GM12878 (cell line): ENCODE measurements at regions of chr14 and their contacts with region 1.

Region 1: DNA sequence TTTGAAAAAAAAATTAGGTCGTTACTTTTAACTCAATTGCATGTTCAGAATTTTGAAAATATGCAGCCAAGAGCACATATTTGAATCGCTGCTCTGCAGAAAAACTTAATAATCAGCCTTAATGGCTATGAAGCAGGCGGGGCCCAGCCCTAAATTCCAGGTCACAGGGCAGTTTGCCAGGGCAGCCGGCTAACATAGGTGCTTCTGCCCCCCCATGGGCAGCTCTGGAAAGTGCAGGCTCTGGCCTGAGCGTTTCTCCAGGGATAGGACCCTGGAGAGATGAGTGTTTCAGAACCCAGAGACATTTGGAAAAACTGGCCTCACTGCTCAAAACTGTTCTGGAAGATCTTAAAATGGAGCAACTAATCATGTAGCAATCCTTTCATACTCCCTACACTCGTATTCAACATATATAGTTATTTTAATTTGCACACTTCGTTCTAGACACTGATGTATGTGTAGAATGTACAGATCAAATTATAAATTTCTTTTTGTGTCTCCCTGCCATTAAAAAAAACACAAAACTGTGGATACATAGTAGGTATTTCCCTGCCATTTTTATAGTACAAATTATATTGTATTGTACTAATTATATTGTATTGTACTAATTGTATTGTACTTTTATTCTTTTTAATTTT is 26.0 kb upstream of the PTGR2 start:
- DNase-seq: peak; percentile 20
- ATAC-seq: peak; percentile 88
- H3K4me3 ChIP-seq: no peak overlapping the region
- H3K27ac ChIP-seq: no peak overlapping the region
- H3K4me1 ChIP-seq: peaks cover 11% of the 10 kb centered on the region
- H3K27me3 ChIP-seq: no peaks in the 10 kb centered on the region
- CTCF ChIP-seq: peak; percentile 89 to 95 (median 93)
- EP300 ChIP-seq: no peak
- POLR2A ChIP-seq: no peak
- RAD21 ChIP-seq: peak; percentile 95

Region 2: DNA sequence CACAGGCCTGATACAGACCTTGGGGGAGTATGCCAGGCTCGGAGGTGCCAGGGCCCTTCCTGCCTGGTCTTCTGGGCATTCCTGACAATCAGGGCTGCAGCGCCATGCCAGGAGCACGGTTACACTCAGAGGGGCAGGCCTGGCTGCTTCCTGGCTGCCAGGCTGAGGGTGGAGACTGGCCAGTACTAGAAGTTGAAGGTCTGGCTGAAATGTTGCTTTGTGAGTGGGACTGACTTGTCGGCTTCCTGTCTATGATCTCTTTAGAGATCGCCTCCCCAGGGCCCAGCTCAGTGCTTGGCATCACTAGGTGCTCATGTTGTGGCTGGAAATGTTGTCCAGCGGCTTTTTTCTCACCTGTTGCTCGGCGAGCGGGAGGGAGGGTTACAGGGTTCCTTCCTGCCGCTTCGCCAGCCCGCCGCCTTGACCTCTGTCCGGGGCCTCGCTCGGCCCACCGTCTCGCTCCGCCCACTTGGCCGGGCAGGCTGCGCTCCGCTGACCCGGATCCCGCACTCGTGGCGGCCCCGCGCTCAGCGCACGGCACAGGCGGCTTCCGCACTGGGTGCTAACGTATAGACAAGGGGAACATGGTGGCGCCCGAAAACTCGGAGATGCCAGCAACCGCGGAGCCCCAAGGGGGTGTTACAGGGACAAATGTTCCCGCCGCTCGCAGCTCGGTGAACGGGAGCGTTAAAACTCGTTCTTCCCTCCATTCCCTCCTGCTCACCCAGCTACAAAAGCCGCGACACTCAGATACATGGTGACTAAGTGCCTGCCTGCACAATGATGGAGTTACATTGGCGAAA is 555.7 kb before region 1 on chr14:
- CTCF ChIA-PET with region 1: no interaction called
- POLR2A ChIA-PET with region 1: no interaction called
- RAD21 ChIA-PET with region 1: no interaction called
- SMC1A ChIA-PET with region 1: no interaction called
- in situ Hi-C with region 1: no loop called
- intact Hi-C with region 1: no loop called
- DNase-seq: no peak
- ATAC-seq: peak; percentile 97
- H3K4me3 ChIP-seq: peak overlapping the region; percentile 46; the same call in 1 of the 2 replicates
- H3K27ac ChIP-seq: peak overlapping the region; percentile 3; the same call in 1 of the 2 replicates
- H3K4me1 ChIP-seq: peaks cover 14% of the 10 kb centered on the region
- H3K27me3 ChIP-seq: no peaks in the 10 kb centered on the region
- CTCF ChIP-seq: no peak
- EP300 ChIP-seq: 0 out of 4 replicates have a peak, but pooled peaks of 1 of the 2 experiments have one; percentile 21
- POLR2A ChIP-seq: no peak; the same call in 1 of the 2 replicates
- RAD21 ChIP-seq: no peak

Region 3: GRCh38 chr14:73746520-73747378 is 78.9 kb before region 1 on chr14:
- CTCF ChIA-PET with region 1: interaction called, 288 read pairs
- POLR2A ChIA-PET with region 1: interaction called, 8 read pairs
- RAD21 ChIA-PET with region 1: interaction called, 23 read pairs
- SMC1A ChIA-PET with region 1: interaction called, 140 read pairs
- in situ Hi-C with region 1: loop called (anchors 5 kb)
- intact Hi-C with region 1: no loop called
- DNase-seq: no peak
- ATAC-seq: peak; percentile 13
- H3K4me3 ChIP-seq: peak overlapping the region; percentile 33
- H3K27ac ChIP-seq: peak overlapping the region; percentile 29
- H3K4me1 ChIP-seq: peaks cover 90% of the 10 kb centered on the region
- H3K27me3 ChIP-seq: no peaks in the 10 kb centered on the region
- CTCF ChIP-seq: peak in 2 of 3 experiments; percentile 15 to 16; a peak in 3 of 6 replicates
- EP300 ChIP-seq: no peak
- POLR2A ChIP-seq: no peak
- RAD21 ChIP-seq: peak; percentile 39

Region 4: GRCh38 chr14:73759714-73760597 is 65.7 kb before region 1 on chr14:
- CTCF ChIA-PET with region 1: interaction called, 288 read pairs
- POLR2A ChIA-PET with region 1: interaction called, 6 read pairs
- RAD21 ChIA-PET with region 1: interaction called, 48 read pairs
- SMC1A ChIA-PET with region 1: interaction called, 140 read pairs
- in situ Hi-C with region 1: no loop called
- intact Hi-C with region 1: no loop called
- DNase-seq: peak; percentile 66
- ATAC-seq: peak; percentile 71
- H3K4me3 ChIP-seq: peak overlapping the region; percentile 83
- H3K27ac ChIP-seq: peak overlapping the region; percentile 100
- H3K4me1 ChIP-seq: peaks cover 63% of the 10 kb centered on the region
- H3K27me3 ChIP-seq: no peaks in the 10 kb centered on the region
- CTCF ChIP-seq: peak in 1 of 3 experiments; percentile 7; a peak in 1 of 6 replicates
- EP300 ChIP-seq: peak; percentile 48 to 58; a peak in 2 of 4 replicates
- POLR2A ChIP-seq: peak; percentile 97
- RAD21 ChIP-seq: no peak

Region 5: GRCh38 chr14:73785873-73786695 is 39.6 kb before region 1 on chr14:
- CTCF ChIA-PET with region 1: interaction called, 40 read pairs
- POLR2A ChIA-PET with region 1: interaction called, 4 read pairs
- RAD21 ChIA-PET with region 1: interaction called, 31 read pairs
- SMC1A ChIA-PET with region 1: interaction called, 10 read pairs
- in situ Hi-C with region 1: no loop called
- intact Hi-C with region 1: loop called (anchors 5 kb)
- DNase-seq: no peak
- ATAC-seq: peak; percentile 75
- H3K4me3 ChIP-seq: peak overlapping the region; percentile 97
- H3K27ac ChIP-seq: peak overlapping the region; percentile 94
- H3K4me1 ChIP-seq: peaks cover 41% of the 10 kb centered on the region
- H3K27me3 ChIP-seq: no peaks in the 10 kb centered on the region
- CTCF ChIP-seq: no peak
- EP300 ChIP-seq: no peak
- POLR2A ChIP-seq: peak; percentile 81
- RAD21 ChIP-seq: no peak

Region 6: DNA sequence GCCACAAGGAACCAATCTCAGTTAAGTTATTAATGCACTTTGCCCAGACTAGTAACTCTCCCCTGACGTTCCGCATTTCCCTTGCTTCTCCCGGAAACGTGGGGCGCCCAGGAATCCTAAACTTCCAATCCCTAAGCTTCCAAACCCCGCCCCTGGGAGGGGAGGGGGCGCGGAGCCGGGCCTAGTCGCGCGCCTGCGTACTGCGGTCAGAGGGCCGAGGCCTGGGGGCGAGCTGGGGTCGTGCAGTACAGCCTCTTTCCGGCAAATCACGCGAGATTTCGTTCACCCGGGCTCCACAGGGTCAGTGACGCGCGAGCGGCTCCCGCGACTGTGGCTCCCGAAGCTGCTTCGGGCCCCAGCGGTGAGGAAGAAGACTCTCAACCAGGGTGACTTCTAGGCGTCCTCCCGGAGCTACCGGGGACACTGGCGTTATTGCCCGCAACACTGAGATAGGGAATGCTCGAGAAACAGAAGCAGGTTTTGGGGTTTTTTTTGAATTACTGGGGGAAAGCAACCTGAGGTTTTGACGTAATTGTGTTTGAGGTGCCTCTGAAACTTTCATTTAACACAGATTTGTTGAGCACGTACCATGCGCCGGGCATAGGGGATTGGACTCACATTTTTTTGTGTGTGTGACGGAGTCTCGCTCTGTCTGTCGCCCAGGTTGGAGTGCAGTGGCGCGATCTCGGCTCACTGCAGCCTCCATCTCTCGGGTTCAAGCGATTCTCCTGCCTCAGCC is 26.1 kb after region 1 on chr14 and contains the start of gene PTGR2:
- CTCF ChIA-PET with region 1: interaction called, 11 read pairs
- POLR2A ChIA-PET with region 1: interaction called, 10 read pairs
- RAD21 ChIA-PET with region 1: interaction called, 6 read pairs
- SMC1A ChIA-PET with region 1: interaction called, 10 read pairs
- in situ Hi-C with region 1: no loop called
- intact Hi-C with region 1: no loop called
- DNase-seq: peak; percentile 74
- ATAC-seq: peak; percentile 97
- H3K4me3 ChIP-seq: peak within 1 kb of the TSS; percentile 76
- H3K27ac ChIP-seq: peak within 1 kb of the TSS; percentile 61
- H3K4me1 ChIP-seq: peaks cover 3% of the 10 kb centered on the region; the same call in 1 of the 2 replicates
- H3K27me3 ChIP-seq: no peaks in the 10 kb centered on the region
- CTCF ChIP-seq: peak in 1 of 3 experiments; percentile 15; a peak in 1 of 6 replicates
- EP300 ChIP-seq: no peak
- POLR2A ChIP-seq: peak; percentile 93
- RAD21 ChIP-seq: no peak
- polyA plus RNA-seq, gene PTGR2: 8.9 to 9.6 TPM

Region 7: GRCh38 chr14:74048281-74048680 is 222.6 kb after region 1 on chr14:
- CTCF ChIA-PET with region 1: no interaction called
- POLR2A ChIA-PET with region 1: no interaction called
- RAD21 ChIA-PET with region 1: no interaction called
- SMC1A ChIA-PET with region 1: no interaction called
- in situ Hi-C with region 1: no loop called
- intact Hi-C with region 1: no loop called
- DNase-seq: no peak
- ATAC-seq: no peak
- H3K4me3 ChIP-seq: no peak overlapping the region
- H3K27ac ChIP-seq: no peak overlapping the region
- H3K4me1 ChIP-seq: no peaks in the 10 kb centered on the region
- H3K27me3 ChIP-seq: no peaks in the 10 kb centered on the region
- CTCF ChIP-seq: no peak
- EP300 ChIP-seq: no peak
- POLR2A ChIP-seq: no peak
- RAD21 ChIP-seq: no peak